CD8-positive, alpha-beta T cell (primary cell): ENCODE measurements at regions of chr9 and their contacts with region 1.

Region 1: DNA sequence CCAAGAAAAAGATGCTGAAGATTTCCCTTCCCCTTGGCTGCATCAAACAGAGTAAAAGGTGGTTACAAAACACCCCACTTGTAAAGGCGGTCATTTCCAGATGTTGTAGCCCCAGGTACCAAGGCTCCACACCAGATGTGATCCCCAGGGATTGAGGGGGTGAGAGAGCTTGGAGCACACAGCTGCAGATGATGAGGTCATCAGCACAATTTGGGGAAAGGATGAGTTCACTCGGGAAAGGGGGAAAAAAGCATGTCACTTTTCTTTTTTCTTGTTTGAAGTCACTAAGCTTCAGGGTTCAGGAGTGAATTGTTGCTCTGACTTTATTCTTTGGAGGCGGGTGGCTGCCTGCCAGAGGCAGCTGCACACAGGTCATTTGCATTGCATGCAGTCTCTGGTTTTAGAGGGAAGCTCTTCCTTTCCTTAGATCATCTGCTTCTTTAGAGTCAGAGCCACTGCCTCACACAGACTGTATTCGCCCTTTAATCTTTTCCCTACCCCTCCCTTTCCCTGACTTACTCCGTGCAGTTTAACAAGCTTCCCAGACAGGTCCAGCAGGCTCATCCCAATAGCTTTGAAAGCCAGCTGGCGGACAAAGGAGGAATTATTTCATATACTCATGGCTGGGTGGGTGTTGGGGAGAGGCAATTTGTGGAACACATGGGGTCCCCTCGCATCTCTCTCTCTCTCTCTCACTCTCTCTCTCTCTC is 409.3 kb upstream of the SLC24A2 start:
- DNase-seq: no peak
- ATAC-seq: no peak
- H3K4me3 ChIP-seq: no peak overlapping the region
- H3K4me3 Mint-ChIP-seq: no peak overlapping the region
- H3K27ac ChIP-seq: no peak overlapping the region
- H3K27ac Mint-ChIP-seq: no peak overlapping the region
- H3K4me1 ChIP-seq: no peaks in the 10 kb centered on the region
- H3K4me1 Mint-ChIP-seq: peaks cover 21% of the 10 kb centered on the region
- H3K27me3 ChIP-seq: peaks cover 0 to 2% of the 10 kb centered on the region in 2 experiments
- H3K27me3 Mint-ChIP-seq: no peaks in the 10 kb centered on the region
- CTCF ChIP-seq: no peak

Region 2: DNA sequence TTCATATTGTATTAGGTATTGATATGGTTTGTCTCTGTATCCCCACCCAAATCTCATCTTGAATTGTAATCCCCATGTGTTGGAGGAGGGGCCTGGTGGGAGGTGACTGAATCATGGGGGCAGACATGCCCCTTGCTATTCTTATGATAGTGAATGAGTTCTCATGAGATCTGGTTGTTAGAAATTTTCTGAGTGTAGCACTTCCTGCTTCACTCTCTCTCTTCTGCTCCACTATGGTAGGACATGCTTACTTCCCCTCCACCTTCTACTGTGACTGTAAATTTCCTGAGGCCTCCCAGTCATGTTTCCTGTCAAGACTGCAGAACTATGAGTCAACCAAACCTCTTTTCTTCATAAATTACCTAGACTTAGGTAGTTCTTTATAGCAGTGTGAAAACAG is 221.9 kb before region 1 on chr9:
- CTCF ChIA-PET with region 1: no interaction called
- POLR2A ChIA-PET with region 1: no interaction called
- intact Hi-C with region 1: loop called in 1 of 2 experiments (anchors 10 kb)
- DNase-seq: peak in 2 of 9 experiments; percentile 3 to 22
- ATAC-seq: peak; percentile 81
- H3K4me3 ChIP-seq: no peak overlapping the region
- H3K4me3 Mint-ChIP-seq: peak overlapping the region; percentile 4
- H3K27ac ChIP-seq: no peak overlapping the region
- H3K27ac Mint-ChIP-seq: peak overlapping the region; percentile 5
- H3K4me1 ChIP-seq: peaks cover 12% of the 10 kb centered on the region
- H3K4me1 Mint-ChIP-seq: peaks cover 15% of the 10 kb centered on the region
- H3K27me3 ChIP-seq: no peaks in the 10 kb centered on the region
- H3K27me3 Mint-ChIP-seq: no peaks in the 10 kb centered on the region
- CTCF ChIP-seq: no peak

Region 3: DNA sequence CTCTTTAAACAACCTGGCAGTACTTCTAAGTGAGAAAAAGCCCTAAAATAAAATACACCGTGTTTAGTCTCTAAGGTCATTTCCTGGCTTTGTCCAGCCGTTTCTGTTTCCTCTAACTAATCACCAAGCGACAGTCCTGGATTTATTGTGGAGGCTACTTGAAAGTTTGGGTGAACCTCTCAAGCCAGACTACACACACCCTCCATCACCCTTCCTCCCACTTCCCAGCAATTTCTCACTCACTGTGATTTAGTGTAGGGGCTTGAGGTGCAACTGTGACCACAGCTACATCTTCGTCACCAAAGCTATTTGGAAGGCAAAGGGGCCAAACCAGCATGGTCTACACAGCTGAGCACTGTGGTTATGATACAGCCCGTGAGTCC is 169.3 kb before region 1 on chr9:
- CTCF ChIA-PET with region 1: no interaction called
- POLR2A ChIA-PET with region 1: no interaction called
- intact Hi-C with region 1: no loop called
- DNase-seq: no peak
- ATAC-seq: no peak
- H3K4me3 ChIP-seq: no peak overlapping the region
- H3K4me3 Mint-ChIP-seq: no peak overlapping the region
- H3K27ac ChIP-seq: no peak overlapping the region
- H3K27ac Mint-ChIP-seq: no peak overlapping the region
- H3K4me1 ChIP-seq: no peaks in the 10 kb centered on the region
- H3K4me1 Mint-ChIP-seq: no peaks in the 10 kb centered on the region
- H3K27me3 ChIP-seq: no peaks in the 10 kb centered on the region
- H3K27me3 Mint-ChIP-seq: no peaks in the 10 kb centered on the region
- CTCF ChIP-seq: no peak

Region 4: DNA sequence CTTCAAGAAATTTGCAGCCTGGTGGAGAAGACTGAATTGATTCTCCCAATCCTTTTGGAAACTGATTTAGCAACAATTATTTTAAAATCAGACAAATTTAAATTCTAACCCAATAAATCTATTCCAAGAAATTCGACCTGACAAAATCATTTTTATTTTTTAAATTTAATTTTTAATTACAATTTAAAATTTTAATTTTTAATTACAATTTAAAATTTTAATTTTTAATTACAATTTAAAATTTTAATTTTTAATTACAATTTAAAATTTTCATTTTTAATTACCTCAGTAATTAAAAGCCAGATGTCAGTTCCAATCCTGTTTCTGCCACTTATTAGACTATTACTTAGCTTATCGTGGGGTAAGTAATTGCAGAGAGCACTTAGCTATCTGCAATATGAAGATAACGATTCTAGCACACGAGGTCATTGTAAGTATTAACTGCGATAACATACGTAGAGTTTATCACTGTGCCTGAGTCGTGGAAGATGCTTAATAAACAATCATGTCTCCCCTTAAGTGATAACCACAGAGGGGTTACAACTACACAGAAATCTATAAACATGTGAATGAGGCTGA is 62.9 kb before region 1 on chr9:
- CTCF ChIA-PET with region 1: no interaction called
- POLR2A ChIA-PET with region 1: no interaction called
- intact Hi-C with region 1: loop called in 1 of 2 experiments (anchors 1 kb)
- DNase-seq: no peak
- ATAC-seq: no peak
- H3K4me3 ChIP-seq: no peak overlapping the region
- H3K4me3 Mint-ChIP-seq: no peak overlapping the region
- H3K27ac ChIP-seq: no peak overlapping the region
- H3K27ac Mint-ChIP-seq: no peak overlapping the region
- H3K4me1 ChIP-seq: no peaks in the 10 kb centered on the region
- H3K4me1 Mint-ChIP-seq: peaks cover 2% of the 10 kb centered on the region
- H3K27me3 ChIP-seq: no peaks in the 10 kb centered on the region
- H3K27me3 Mint-ChIP-seq: no peaks in the 10 kb centered on the region
- CTCF ChIP-seq: no peak

Region 5: DNA sequence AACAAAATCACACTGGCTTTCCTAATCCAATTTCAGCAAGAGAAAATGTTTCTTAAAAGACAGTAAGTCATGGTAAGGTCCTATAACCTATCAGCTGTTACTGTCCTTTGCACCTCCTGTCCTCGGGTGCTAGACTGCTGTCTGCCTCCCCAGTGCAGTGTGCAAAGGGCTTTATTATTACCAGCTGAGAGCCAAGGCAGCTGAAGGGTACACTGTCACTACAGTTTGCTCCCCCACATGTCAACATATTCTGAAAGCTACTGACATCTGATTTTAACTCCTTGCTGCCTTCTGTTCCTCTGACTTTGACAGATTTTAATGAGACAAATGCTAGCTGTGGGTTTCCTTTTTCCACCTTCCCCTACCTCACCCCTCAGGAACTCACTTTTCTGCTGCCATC is 19.9 kb before region 1 on chr9:
- CTCF ChIA-PET with region 1: no interaction called
- POLR2A ChIA-PET with region 1: no interaction called
- intact Hi-C with region 1: loop called in 1 of 2 experiments (anchors 2 kb)
- DNase-seq: no peak
- ATAC-seq: no peak
- H3K4me3 ChIP-seq: no peak overlapping the region
- H3K4me3 Mint-ChIP-seq: no peak overlapping the region
- H3K27ac ChIP-seq: no peak overlapping the region
- H3K27ac Mint-ChIP-seq: no peak overlapping the region
- H3K4me1 ChIP-seq: no peaks in the 10 kb centered on the region
- H3K4me1 Mint-ChIP-seq: no peaks in the 10 kb centered on the region
- H3K27me3 ChIP-seq: no peaks in the 10 kb centered on the region
- H3K27me3 Mint-ChIP-seq: no peaks in the 10 kb centered on the region
- CTCF ChIP-seq: no peak

Region 6: DNA sequence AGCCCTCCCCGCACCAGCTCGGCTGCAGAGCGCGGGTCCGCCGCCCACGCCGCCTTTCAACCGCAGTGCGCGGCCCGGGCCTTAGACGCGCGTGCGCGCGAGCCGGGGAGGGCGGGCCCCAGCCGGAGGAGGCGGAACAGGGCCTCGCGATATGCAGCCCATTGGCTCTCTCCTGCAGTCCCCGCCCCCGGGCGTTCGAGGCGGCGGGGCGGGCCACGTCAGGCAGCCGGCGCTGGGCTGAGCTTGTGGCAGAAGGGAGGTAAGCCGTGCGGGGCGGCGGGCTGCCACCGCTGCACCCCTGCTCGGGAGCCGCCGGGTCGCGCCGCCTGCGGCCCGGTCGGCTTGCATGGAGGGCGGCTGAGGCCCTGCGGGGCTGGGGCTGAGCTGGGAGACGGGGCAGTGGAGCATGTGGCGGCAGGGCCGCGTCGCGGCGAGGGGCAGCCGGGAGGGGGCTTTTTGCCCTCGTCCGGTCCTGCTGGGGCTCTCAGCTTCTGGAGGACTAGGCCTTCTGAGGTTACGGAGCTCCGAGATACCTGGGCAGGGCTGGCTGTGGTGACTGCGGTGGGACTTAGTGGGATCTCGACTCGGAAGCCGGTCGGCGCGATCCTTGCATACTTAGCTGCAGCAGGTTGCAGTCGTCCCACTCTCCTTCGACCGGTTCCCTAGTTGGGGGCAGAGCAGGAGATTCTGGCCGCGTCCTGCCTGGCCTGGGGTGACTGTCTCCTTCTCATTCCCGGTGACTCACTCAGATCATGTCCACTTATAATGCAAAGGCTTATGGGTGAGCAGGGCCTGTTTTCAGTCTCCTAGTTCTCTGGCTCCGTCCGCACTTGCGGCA is 486.1 kb after region 1 on chr9 and contains the start of gene FOCAD:
- CTCF ChIA-PET with region 1: no interaction called
- POLR2A ChIA-PET with region 1: no interaction called
- intact Hi-C with region 1: no loop called
- DNase-seq: peak; percentile 88 to 97 (median 94)
- ATAC-seq: peak; percentile 98
- H3K4me3 ChIP-seq: peak within 1 kb of the TSS; percentile 63 to 74
- H3K4me3 Mint-ChIP-seq: peak within 1 kb of the TSS; percentile 87
- H3K27ac ChIP-seq: peak within 1 kb of the TSS; percentile 57 to 64
- H3K27ac Mint-ChIP-seq: peak within 1 kb of the TSS; percentile 84
- H3K4me1 ChIP-seq: peaks cover 8% of the 10 kb centered on the region
- H3K4me1 Mint-ChIP-seq: peaks cover 20% of the 10 kb centered on the region
- H3K27me3 ChIP-seq: no peaks in the 10 kb centered on the region
- H3K27me3 Mint-ChIP-seq: no peaks in the 10 kb centered on the region
- CTCF ChIP-seq: no peak
- total RNA-seq, gene FOCAD: 7.1 to 9.8 TPM